ENCODE measurements at regions of chr9 and their contacts with region 1.

Region 1: GRCh38 chr9:84079994-84080393 is 99.4 kb downstream of the RMI1 start:
- DNase-seq: no peak
- ATAC-seq: peak; percentile 42; the same call in 1 of the 3 replicates
- H3K4me3 ChIP-seq: no peak overlapping the region
- H3K27ac ChIP-seq: no peak overlapping the region
- H3K4me1 ChIP-seq: no peaks in the 10 kb centered on the region
- H3K27me3 ChIP-seq: no peaks in the 10 kb centered on the region
- CTCF ChIP-seq: no peak
- EP300 ChIP-seq: no peak
- POLR2A ChIP-seq: no peak
- RAD21 ChIP-seq: no peak

Region 2: GRCh38 chr9:83521411-83521810 is 558.6 kb before region 1 on chr9:
- CTCF ChIA-PET with region 1: no interaction called
- POLR2A ChIA-PET with region 1: no interaction called
- in situ Hi-C with region 1: no loop called
- intact Hi-C with region 1: no loop called
- DNase-seq: no peak
- ATAC-seq: no peak
- H3K4me3 ChIP-seq: no peak overlapping the region
- H3K27ac ChIP-seq: no peak overlapping the region
- H3K4me1 ChIP-seq: no peaks in the 10 kb centered on the region
- H3K27me3 ChIP-seq: no peaks in the 10 kb centered on the region
- CTCF ChIP-seq: no peak
- EP300 ChIP-seq: no peak
- POLR2A ChIP-seq: no peak
- RAD21 ChIP-seq: no peak

Region 3: DNA sequence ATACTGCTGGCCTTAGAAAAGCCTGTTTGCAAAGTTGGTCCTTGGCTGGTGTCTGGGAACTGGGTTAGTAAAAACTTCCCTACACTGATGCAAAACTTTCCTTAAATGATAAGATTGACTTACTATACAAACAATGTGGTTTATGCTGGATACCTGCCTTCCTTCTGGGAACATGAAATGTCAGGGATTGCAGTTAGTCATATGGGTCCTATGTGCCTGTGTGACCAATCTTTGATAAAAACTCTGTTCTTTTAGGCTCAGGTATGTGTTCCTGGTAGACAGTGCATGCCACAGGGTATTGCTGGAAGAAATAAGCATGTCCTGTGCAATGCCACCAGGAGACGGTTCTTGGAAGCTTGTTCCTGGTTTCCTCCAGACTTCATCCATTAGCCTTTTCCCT is 73.9 kb after region 1 on chr9:
- CTCF ChIA-PET with region 1: no interaction called
- POLR2A ChIA-PET with region 1: no interaction called
- in situ Hi-C with region 1: no loop called
- intact Hi-C with region 1: loop called (anchors 2 kb)
- DNase-seq: no peak
- ATAC-seq: no peak
- H3K4me3 ChIP-seq: no peak overlapping the region
- H3K27ac ChIP-seq: no peak overlapping the region
- H3K4me1 ChIP-seq: no peaks in the 10 kb centered on the region
- H3K27me3 ChIP-seq: peaks cover 0 to 3% of the 10 kb centered on the region in 2 experiments; a peak in 2 of 5 replicates
- CTCF ChIP-seq: no peak
- EP300 ChIP-seq: no peak
- POLR2A ChIP-seq: no peak
- RAD21 ChIP-seq: no peak

Measured in K562 (cell line).